MCF 10A (cell line): ENCODE measurements at regions of chr4 and their contacts with region 1.

Region 1: GRCh38 chr4:66451741-66452140 is 781.5 kb upstream of the EPHA5 start:
- DNase-seq: no peak
- H3K4me3 Mint-ChIP-seq: no peak overlapping the region
- H3K27ac Mint-ChIP-seq: no peak overlapping the region
- H3K4me1 Mint-ChIP-seq: peaks cover 5% of the 10 kb centered on the region
- H3K27me3 Mint-ChIP-seq: no peaks in the 10 kb centered on the region
- CTCF ChIP-seq: no peak

Region 2: DNA sequence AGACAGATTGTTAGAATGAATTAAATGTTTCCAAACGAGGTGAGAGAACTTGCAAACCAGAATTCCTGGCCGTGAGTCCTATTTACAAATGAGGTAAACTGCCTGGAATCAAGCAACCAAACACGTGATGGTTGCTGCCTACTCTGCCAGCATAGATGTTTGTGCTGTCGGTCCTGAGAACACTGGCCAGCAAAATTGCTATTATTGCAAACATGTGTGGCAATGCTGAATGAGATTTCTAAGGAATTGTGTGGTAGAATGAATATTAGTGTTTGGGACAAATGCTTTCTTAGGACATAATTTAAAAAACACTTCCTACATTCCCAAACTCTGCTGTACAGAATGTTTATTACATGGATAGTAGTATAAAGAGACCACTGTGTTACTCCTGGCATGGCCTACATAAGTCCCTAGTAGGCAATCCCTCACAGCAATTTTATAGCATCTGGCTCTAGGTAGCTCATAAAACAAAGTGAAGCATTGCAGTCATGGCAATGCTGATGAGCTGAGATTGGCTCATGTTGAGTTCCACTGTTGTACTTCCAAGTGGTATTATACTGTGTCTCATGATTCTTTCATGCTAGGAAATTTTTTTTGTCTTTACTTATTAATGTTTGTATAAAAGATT is 176.2 kb before region 1 on chr4:
- CTCF ChIA-PET with region 1: no interaction called
- POLR2A ChIA-PET with region 1: no interaction called
- intact Hi-C with region 1: loop called (anchors 10 kb)
- DNase-seq: no peak
- H3K4me3 Mint-ChIP-seq: no peak overlapping the region
- H3K27ac Mint-ChIP-seq: no peak overlapping the region
- H3K4me1 Mint-ChIP-seq: no peaks in the 10 kb centered on the region
- H3K27me3 Mint-ChIP-seq: no peaks in the 10 kb centered on the region
- CTCF ChIP-seq: no peak

Region 3: GRCh38 chr4:66927937-66928336 is 476.2 kb after region 1 on chr4:
- CTCF ChIA-PET with region 1: no interaction called
- POLR2A ChIA-PET with region 1: no interaction called
- intact Hi-C with region 1: no loop called
- DNase-seq: no peak
- H3K4me3 Mint-ChIP-seq: no peak overlapping the region
- H3K27ac Mint-ChIP-seq: no peak overlapping the region
- H3K4me1 Mint-ChIP-seq: no peaks in the 10 kb centered on the region
- H3K27me3 Mint-ChIP-seq: no peaks in the 10 kb centered on the region
- CTCF ChIP-seq: no peak